ENCODE measurements at regions of chr16 and their contacts with region 1.

Region 1: DNA sequence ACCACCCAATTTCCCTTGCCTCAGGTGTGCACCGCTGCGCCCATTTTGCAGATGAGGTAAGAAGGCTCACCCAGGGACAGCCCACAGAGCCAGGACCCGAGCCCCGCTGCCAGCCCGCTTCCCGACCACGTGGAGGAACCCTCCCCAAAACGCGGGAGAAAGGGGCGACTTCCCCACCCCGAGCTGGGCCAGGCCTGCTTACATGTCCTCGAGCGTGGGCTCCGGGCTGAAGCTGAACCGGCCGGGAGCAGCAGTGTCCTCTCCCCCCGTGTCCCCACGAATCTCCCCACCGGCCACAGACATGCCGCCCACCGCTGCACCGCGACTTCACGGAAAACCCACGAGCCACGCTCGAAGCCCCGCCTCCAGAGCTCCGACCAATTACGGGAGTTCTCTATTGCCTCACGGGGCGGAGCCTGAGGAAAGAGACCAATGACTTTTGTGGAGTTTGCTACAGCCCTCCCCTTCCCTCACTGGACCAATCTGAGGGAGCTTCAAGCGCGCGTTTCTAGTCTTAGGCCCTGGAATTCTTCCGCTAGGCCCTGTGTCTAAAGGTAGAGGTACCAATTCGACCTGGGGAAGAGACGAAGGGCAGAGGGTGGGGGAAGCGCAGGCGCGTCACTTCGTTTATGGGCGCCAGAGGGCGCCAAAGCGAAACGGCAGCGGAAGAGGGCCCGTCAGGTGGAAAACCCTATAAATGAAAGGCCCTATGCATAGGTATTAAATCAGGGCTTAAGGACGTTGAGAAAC is at the start of gene DCTPP1:
- DNase-seq: peak; percentile 98
- ATAC-seq: peak; percentile 92
- total RNA-seq, gene DCTPP1: 76.7 to 102 TPM

Region 2: GRCh38 chr16:30609926-30610839 is 180.3 kb after region 1 on chr16 and contains the start of gene ZNF689:
- intact Hi-C with region 1: loop called in 1 of 2 experiments (anchors 10 kb)
- DNase-seq: peak; percentile 93 to 94
- ATAC-seq: peak; percentile 94
- total RNA-seq, gene ZNF689: 6.8 to 6.9 TPM

Region 3: DNA sequence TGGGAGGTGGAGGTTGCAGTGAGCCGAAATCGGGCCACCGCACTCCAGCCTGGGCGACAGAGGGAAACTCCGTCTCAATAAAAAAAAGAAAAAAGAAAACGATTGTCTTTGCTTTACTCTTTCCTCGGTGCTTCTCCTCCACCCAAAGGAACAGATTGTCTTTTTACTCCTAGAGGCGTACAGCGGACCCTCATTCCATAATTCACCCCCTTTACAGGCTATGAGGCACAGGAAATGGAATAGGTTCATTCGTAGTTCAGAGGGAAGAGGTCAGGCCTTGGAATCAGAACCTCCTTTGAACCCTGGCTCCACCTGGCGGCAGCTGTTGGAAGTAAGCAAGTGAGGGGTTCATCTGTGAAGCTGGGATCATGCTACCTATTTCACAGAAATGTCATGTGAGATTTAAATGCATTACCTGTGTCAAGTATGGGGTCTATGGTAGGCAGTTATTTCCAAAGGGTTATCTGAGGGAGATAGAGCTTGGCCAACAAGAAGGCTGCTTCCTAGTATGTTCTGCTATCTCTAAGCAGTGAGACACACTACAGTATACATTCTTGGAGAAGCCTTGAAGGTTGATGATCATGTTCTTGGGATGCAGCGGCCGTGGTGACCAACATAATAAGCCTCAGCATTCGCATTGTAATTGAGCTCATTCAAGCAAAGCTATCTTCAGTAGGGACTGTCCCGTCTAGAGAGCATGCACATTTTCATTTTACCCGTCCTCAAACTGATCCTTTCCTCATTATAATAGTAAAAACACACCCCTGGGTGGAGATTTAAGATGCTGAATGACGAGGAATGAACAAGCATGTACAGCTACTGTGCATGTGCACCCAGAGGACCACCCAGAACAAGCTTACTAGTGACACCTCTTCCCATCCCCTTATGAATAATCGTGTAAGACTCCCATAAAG is 199.0 kb after region 1 on chr16:
- intact Hi-C with region 1: loop called in 1 of 2 experiments (anchors 5 kb)
- DNase-seq: peak; percentile 76 to 94
- ATAC-seq: peak; percentile 95

Measured in left colon (tissue), 2 donors.